ENCODE measurements at regions of chr1 and their contacts with region 1.

Region 1: DNA sequence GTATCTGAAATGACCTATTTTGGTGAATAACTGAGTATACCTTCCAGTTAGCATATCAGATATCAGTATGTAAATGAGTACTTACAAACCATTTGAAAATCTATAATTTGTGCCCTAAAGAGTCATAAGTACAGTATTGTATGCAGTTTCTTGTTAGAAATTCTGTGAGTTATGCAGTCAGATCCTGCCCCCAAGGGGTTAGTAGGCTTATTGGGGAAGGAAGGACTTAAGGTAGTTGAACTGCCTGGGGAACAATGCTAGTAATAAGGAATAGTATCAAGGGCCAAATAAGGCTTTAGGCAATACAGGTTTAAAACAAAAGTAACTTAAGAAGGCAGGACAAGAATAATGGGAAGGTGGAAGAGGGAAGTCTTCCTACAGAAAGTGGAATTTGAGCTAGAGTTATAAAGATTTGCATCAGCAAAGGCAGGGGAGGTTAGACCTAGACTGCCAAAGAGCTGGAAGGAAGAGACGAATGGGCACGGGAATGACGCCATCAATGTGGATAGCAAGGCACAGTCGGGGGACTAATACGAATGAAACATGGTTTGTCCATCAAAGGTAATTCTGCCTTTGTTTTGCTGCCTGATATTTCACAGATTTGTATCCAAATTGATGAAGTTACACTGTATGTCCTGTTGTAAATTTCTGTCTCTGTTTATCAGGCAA is 182.9 kb upstream of the DPYD start:
- DNase-seq: no peak
- H3K4me3 Mint-ChIP-seq: no peak overlapping the region
- H3K27ac Mint-ChIP-seq: no peak overlapping the region
- H3K4me1 Mint-ChIP-seq: peaks cover 11% of the 10 kb centered on the region
- H3K27me3 Mint-ChIP-seq: no peaks in the 10 kb centered on the region
- CTCF ChIP-seq: no peak

Region 2: DNA sequence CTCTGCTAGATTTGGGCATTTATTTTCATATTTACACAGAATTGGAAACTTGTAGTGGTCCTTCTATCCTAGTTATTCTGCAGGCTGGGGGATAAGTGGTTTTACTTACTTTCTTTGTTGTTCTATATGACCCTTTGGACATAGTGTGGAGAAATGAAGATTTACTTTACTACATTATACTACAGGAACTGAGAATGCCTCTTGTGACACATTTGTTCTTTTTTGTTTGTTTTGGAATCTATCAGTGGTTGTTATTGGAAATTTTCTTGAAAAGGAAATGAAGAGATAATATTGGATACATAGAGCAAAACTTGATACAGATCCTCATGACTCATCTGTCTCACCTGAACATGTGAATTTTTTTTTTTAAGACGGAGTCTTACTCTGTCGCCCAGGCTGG is 36.8 kb before region 1 on chr1:
- CTCF ChIA-PET with region 1: no interaction called
- intact Hi-C with region 1: loop called (anchors 1 kb)
- DNase-seq: no peak
- H3K4me3 Mint-ChIP-seq: no peak overlapping the region
- H3K27ac Mint-ChIP-seq: no peak overlapping the region
- H3K4me1 Mint-ChIP-seq: no peaks in the 10 kb centered on the region
- H3K27me3 Mint-ChIP-seq: no peaks in the 10 kb centered on the region
- CTCF ChIP-seq: no peak

Measured in Calu3 (cell line).